Heart right ventricle (tissue), 16 donors: ENCODE measurements at regions of chr3 and their contacts with region 1.

Region 1: GRCh38 chr3:119498186-119498987 is at the start of gene TIMMDC1:
- DNase-seq: peak; percentile 96 to 98
- ATAC-seq: peak; percentile 99 to 100 (median 100)
- H3K4me3 ChIP-seq: peak within 1 kb of the TSS; percentile 66 to 93 (median 82)
- H3K27ac ChIP-seq: peak within 1 kb of the TSS; percentile 74 to 98 (median 96)
- H3K4me1 ChIP-seq: peaks cover 9 to 44% (median 31%) of the 10 kb centered on the region in 9 donors
- H3K27me3 ChIP-seq: no peaks in the 10 kb centered on the region
- CTCF ChIP-seq: peak in 1 of 9 donors; percentile 7
- total RNA-seq, gene TIMMDC1: 213 to 379 (median 240) TPM

Region 2: GRCh38 chr3:119469381-119470189 is 28.8 kb before region 1 on chr3:
- intact Hi-C with region 1: loop called in 1 of 10 experiments (anchors 2 kb)
- DNase-seq: no peak
- ATAC-seq: peak in 4 of 8 donors; percentile 2 to 20 (median 10)
- H3K4me3 ChIP-seq: peak overlapping the region; percentile 79 to 100 (median 88)
- H3K27ac ChIP-seq: peak overlapping the region; percentile 67 to 93 (median 84)
- H3K4me1 ChIP-seq: peaks cover 0 to 23% (median 13%) of the 10 kb centered on the region in 9 donors
- H3K27me3 ChIP-seq: no peaks in the 10 kb centered on the region
- CTCF ChIP-seq: no peak

Region 3: DNA sequence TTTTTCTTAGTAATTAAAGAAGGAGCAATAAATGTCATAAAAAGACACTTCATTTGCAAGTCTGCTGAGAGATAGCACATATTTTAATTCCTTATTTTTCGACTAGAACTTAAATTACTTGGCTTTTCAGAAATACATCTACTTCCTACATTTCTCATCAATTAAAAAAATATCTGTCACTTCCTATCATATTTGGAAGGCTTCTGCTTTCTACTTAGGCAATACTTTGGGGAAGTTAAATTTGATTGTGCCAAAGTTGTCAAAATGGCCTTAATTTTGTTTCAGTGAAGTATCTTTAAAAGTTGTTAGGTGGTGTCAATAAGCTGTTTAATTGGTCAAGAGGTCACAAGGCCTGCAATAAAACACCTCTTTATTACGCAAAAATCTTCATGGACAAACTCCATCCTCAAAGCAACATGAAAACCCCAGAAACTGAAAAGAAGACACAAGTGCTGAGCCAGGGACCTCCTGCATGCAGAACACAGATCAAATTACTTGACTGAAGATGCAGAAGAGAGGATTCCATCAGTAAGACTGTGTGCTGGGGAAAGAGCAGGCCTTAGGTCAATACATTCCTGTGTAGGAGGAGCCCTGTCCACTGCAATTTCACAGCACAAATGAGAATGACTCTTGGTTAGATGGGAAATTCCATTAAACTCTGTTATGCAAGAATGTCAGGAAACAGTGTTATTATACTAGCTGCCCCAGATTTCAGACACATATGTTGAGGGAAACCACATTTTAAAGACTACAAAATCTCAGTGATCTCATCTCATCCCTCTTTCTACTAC is 1000.4 kb after region 1 on chr3:
- intact Hi-C with region 1: loop called in 1 of 10 experiments (anchors 10 kb)
- DNase-seq: no peak
- ATAC-seq: peak in 7 of 8 donors; percentile 43 to 84 (median 57)
- H3K4me3 ChIP-seq: no peak overlapping the region
- H3K27ac ChIP-seq: peak overlapping the region in 6 of 10 donors; percentile 1 to 57 (median 14)
- H3K4me1 ChIP-seq: peaks cover 0 to 29% (median 11%) of the 10 kb centered on the region in 9 donors
- H3K27me3 ChIP-seq: no peaks in the 10 kb centered on the region
- CTCF ChIP-seq: no peak